Prostate gland (tissue), 2 donors: ENCODE measurements at regions of chr21 and their contacts with region 1.

Region 1: DNA sequence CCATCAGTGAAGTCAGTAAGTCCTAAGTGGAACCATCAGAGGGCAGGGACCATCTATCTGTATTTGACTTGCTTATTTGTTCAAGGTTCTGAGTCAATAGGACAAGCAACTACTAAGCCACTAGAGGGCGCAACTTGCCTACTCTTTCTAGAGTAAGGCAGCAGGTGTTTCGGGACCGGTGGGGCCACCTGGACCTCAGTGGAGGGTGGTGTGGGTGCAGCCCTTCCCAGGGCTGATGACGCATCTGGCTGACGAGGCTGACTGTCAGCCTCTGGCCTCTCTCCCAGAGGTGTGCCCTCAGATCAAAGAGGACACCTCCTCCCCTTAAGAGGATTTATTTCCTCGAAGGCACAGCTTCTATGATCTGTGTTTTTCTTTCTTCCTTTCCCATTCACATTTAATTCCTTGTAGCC is 6.6 kb downstream of the CBR3 start:
- DNase-seq: peak; percentile 99
- H3K4me3 ChIP-seq: no peak overlapping the region
- H3K27ac ChIP-seq: peak overlapping the region; percentile 69 to 80
- H3K4me1 ChIP-seq: no peaks in the 10 kb centered on the region
- H3K27me3 ChIP-seq: no peaks in the 10 kb centered on the region
- CTCF ChIP-seq: peak; percentile 53 to 96 (median 94)
- POLR2A ChIP-seq: peak; percentile 10

Region 2: DNA sequence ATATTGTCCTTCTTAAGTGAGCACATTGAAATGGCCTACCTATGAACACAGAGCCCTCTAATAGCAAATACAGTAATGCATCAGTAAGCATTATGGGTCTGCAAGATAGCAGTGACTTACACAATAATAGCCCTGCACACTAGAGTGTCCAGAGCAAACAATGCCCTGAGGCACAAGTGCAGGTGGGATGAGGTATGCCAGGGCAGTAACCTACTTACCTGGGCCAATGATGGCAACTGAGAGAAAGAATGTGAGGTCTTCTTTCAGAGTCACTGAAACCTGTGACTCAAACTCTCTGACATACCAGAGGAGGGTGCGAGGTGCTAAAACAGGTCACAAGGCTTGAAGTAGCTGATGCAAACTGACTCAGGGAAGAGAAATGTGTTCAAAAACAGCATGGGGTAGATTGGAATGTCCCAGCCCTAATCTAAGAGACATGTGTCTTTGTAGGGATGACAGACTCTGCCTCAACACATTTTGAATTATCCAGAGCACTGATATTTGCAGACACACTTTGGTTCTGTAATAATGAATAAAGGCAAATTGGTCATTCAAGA is 923.9 kb before region 1 on chr21:
- intact Hi-C with region 1: no loop called
- DNase-seq: no peak
- H3K4me3 ChIP-seq: no peak overlapping the region
- H3K27ac ChIP-seq: no peak overlapping the region
- H3K4me1 ChIP-seq: no peaks in the 10 kb centered on the region
- H3K27me3 ChIP-seq: no peaks in the 10 kb centered on the region
- CTCF ChIP-seq: no peak
- POLR2A ChIP-seq: no peak

Region 3: GRCh38 chr21:36209626-36210171 is 68.2 kb after region 1 on chr21:
- intact Hi-C with region 1: loop called (anchors 5 kb)
- DNase-seq: peak; percentile 69
- H3K4me3 ChIP-seq: no peak overlapping the region
- H3K27ac ChIP-seq: no peak overlapping the region
- H3K4me1 ChIP-seq: no peaks in the 10 kb centered on the region
- H3K27me3 ChIP-seq: no peaks in the 10 kb centered on the region
- CTCF ChIP-seq: peak; percentile 15 to 81 (median 73)
- POLR2A ChIP-seq: no peak